Activated CD8-positive, alpha-beta T cell treated with anti-CD3 and anti-CD28 coated beads for 36 hours (primary cell): ENCODE measurements at regions of chr2 and their contacts with region 1.

Region 1: DNA sequence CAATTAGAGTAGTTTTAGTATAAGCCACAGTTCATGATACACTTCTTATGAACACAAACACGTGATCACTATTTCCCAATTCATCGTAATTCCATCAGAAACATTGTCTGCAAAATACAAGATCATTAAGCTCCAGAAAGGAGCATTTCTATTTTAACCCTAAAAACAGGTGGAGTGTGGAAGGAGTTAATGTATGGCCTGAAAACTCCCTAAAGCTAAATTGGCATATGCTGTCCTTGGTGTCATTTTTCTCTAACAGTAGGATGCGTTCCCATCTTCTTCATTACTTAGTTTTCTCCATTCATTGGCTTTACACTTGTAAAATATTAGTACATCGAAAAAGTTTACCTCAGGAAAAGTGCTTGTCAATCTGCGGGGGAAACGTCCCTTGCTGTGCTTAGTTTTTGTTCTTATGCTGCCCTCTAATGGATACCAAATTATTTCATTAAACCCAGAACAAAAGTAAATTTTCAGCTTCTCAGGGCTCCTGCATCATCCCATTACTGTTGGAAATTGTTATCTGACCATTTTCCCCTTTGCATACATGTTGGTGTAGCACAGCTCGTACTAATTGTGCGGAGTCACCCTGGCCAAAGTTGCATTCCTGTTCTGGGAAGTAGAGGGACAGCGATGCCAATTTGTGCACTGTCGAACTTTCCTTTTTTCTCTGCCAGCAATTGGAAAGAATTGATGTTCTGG is 153.4 kb downstream of the GPD2 start:
- DNase-seq: peak; percentile 32
- ATAC-seq: no peak
- H3K4me3 Mint-ChIP-seq: no peak overlapping the region
- H3K27ac Mint-ChIP-seq: no peak overlapping the region
- H3K4me1 Mint-ChIP-seq: peaks cover 4% of the 10 kb centered on the region
- H3K27me3 Mint-ChIP-seq: no peaks in the 10 kb centered on the region
- CTCF ChIP-seq: peak; percentile 76

Region 2: GRCh38 chr2:156192468-156192867 is 397.1 kb before region 1 on chr2:
- CTCF ChIA-PET with region 1: interaction called, 8 read pairs
- POLR2A ChIA-PET with region 1: no interaction called
- intact Hi-C with region 1: loop called (anchors 10 kb)
- DNase-seq: peak; percentile 23
- ATAC-seq: peak; percentile 58
- H3K4me3 Mint-ChIP-seq: no peak overlapping the region
- H3K27ac Mint-ChIP-seq: no peak overlapping the region
- H3K4me1 Mint-ChIP-seq: peaks cover 12% of the 10 kb centered on the region
- H3K27me3 Mint-ChIP-seq: no peaks in the 10 kb centered on the region
- CTCF ChIP-seq: no peak

Region 3: DNA sequence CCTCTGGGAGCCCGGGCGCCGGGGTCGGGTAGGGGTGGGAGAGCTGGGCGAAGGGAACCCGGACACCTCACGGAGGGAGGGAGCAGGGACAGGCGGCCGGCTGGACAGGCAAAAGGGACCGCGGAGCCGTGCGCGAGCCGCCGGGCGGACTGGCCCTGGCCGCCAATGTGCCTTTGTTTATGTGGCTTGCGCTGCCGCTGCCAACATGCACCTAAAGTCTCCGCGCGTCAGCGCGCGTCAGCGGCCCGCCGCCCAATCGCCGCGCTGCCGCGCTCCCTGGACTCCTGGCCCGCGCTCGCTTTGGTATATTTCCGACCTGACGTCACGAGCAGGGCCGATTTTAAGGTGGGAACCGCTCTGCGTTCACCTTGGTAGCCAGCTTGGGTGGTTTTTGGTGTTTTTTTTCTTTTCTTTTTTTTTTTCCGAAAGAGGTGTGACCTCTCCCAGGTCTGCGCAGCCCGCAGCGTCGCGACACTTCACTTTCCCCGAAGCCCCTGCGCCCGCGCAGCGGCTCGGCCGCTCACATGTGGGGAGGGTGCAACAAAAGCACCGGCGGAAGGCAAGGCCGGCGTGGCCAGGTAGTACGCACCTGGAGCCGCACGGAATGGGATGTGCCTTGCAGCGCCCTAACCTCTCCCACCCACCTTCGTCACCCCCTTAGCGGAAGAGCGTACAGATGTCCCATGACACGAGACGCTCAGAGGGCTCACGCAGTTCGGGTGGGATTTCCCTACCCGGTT is 256.8 kb before region 1 on chr2 and contains the start of gene NR4A2:
- CTCF ChIA-PET with region 1: interaction called, 33 read pairs
- POLR2A ChIA-PET with region 1: interaction called, 7 read pairs
- intact Hi-C with region 1: loop called (anchors 5 kb)
- DNase-seq: peak; percentile 96
- ATAC-seq: peak; percentile 56
- H3K4me3 Mint-ChIP-seq: peak within 1 kb of the TSS; percentile 82
- H3K27ac Mint-ChIP-seq: peak within 1 kb of the TSS; percentile 98
- H3K4me1 Mint-ChIP-seq: peaks cover 43% of the 10 kb centered on the region
- H3K27me3 Mint-ChIP-seq: no peaks in the 10 kb centered on the region
- CTCF ChIP-seq: no peak
- total RNA-seq, gene NR4A2: 57.6 to 61.6 TPM

Region 4: DNA sequence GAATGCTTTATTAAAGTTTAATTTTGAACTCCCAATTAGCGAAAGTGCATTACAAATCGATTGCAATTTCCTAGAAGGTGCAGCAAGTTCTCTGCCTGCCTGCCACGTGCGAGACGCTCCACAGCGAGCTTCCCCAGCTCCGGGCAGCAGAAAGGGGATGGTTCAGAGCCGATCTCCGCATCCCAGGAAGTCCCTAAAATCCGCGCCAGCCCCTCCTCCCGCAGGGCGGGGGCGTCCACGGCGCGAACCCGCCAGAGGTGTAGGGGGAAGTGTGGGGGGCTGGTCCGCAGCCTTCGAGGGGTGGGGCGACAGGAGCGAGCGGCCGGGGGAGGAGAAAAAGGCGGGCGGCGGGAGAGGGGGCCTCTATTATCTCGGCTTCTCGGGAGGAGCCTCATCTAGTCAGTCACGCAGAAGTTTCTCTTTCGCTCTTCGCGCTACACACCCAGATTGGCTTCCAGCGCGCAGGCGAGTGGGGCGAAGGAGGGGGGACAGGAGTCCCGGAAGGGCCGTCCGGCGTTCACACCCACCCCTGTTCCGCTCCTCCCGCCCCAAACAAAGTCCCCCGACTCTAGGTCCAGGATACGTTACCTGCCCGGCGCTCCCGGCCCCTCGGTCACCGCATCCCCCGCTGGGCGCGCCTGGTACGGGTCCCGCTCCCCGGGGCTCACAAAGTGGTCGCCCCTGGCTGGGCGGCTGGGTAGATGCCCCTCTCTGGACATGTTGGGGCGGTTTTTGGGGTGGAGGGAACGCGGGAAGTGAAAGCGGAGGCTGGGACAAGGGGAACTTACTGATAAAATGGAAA is 247.9 kb before region 1 on chr2:
- CTCF ChIA-PET with region 1: interaction called, 21 read pairs
- POLR2A ChIA-PET with region 1: interaction called, 3 read pairs
- intact Hi-C with region 1: no loop called
- DNase-seq: peak; percentile 94
- ATAC-seq: peak; percentile 81
- H3K4me3 Mint-ChIP-seq: peak overlapping the region; percentile 80
- H3K27ac Mint-ChIP-seq: peak overlapping the region; percentile 97
- H3K4me1 Mint-ChIP-seq: peaks cover 45% of the 10 kb centered on the region
- H3K27me3 Mint-ChIP-seq: no peaks in the 10 kb centered on the region
- CTCF ChIP-seq: no peak

Region 5: GRCh38 chr2:156400706-156401678 is 188.5 kb before region 1 on chr2:
- CTCF ChIA-PET with region 1: interaction called, 11 read pairs
- POLR2A ChIA-PET with region 1: no interaction called
- intact Hi-C with region 1: no loop called
- DNase-seq: peak; percentile 85
- ATAC-seq: peak; percentile 73
- H3K4me3 Mint-ChIP-seq: peak overlapping the region; percentile 80
- H3K27ac Mint-ChIP-seq: peak overlapping the region; percentile 91
- H3K4me1 Mint-ChIP-seq: peaks cover 22% of the 10 kb centered on the region
- H3K27me3 Mint-ChIP-seq: peaks cover 2% of the 10 kb centered on the region
- CTCF ChIP-seq: no peak

Region 6: DNA sequence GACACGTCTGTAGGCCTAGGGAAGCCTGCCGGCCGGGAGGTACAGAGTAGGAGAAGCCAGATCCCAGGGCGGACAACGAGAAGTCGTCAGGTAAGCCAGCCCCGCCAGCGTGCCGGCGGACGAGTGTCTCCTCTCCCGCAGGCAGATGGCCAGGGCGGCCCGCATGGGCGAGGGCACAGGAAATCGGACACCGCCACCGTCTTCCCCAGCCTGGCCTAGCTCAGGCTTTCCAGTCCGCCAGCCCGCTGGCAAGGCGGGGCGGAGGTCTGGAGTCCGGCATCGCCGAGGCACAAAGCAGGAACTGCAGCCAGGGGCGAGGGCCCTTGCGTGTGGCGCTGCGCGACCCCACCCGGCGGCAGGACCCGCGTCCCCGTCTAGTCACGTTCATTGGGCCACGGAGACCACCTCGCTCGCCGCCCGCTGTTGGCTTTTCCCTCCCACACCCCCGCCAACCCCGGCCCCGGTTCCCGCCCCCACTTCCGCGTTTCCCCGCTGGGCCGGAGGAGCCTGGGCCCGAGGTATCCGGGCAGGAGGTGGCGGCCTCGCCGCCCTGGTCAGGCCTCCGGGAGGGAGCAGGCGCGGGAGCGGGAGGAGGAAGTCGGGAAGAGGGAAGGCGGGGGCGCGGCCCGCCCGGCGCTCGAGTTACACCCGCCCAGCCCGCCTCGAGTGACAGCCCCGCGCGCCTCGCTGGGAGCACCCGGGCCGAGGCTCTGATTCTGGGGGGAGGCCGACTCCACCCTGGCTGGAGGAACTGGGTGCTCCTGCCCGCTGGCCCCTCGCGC is 153.6 kb before region 1 on chr2 and contains the start of gene GPD2:
- CTCF ChIA-PET with region 1: interaction called, 12 read pairs
- POLR2A ChIA-PET with region 1: no interaction called
- intact Hi-C with region 1: loop called (anchors 10 kb)
- DNase-seq: peak; percentile 59
- ATAC-seq: peak; percentile 69
- H3K4me3 Mint-ChIP-seq: peak within 1 kb of the TSS; percentile 85
- H3K27ac Mint-ChIP-seq: peak within 1 kb of the TSS; percentile 94
- H3K4me1 Mint-ChIP-seq: peaks cover 32% of the 10 kb centered on the region
- H3K27me3 Mint-ChIP-seq: no peaks in the 10 kb centered on the region
- CTCF ChIP-seq: no peak
- total RNA-seq, gene GPD2: 33.5 to 40.9 TPM

Region 7: GRCh38 chr2:156565066-156565710 is 24.3 kb before region 1 on chr2:
- CTCF ChIA-PET with region 1: interaction called, 14 read pairs
- POLR2A ChIA-PET with region 1: no interaction called
- intact Hi-C with region 1: no loop called
- DNase-seq: no peak
- ATAC-seq: no peak
- H3K4me3 Mint-ChIP-seq: no peak overlapping the region
- H3K27ac Mint-ChIP-seq: peak overlapping the region; percentile 52
- H3K4me1 Mint-ChIP-seq: peaks cover 11% of the 10 kb centered on the region
- H3K27me3 Mint-ChIP-seq: no peaks in the 10 kb centered on the region
- CTCF ChIP-seq: no peak

Region 8: DNA sequence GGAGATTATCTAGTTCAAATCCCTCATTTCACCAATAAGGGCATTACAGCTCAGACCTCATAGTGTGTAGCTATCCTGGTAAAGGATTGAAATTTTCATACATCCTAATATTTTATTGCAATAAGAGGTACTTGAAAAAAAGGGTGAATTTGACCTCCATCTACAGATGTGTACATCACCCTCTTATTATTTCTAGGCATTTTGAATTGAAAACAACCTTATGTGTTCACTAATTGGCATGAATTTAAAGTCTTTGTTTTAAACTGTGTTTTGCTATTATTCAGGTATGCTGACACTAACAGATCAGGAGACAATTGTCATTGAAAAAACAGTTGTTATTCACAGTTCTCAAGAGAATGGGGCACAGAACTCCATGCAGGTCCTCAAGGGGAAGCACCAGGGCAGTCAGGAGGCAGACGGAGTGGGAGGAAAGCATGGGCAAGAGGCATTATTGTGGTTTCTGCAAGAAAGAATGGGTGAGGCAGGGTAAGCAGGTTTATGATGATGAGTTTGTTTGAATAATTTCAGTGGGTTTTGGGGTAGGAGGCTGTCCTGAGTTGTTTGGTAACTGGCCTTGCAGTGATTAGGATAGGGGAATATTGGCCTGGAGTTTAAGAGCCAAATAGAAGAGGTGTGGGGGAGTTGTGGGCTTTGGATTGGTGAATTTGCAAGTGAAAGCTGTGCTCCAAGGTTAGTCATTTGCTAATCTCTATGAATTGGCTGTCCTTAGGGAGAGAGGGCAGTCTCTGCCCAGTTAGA is 41.2 kb after region 1 on chr2:
- CTCF ChIA-PET with region 1: no interaction called
- POLR2A ChIA-PET with region 1: no interaction called
- intact Hi-C with region 1: no loop called
- DNase-seq: no peak
- ATAC-seq: no peak
- H3K4me3 Mint-ChIP-seq: no peak overlapping the region
- H3K27ac Mint-ChIP-seq: no peak overlapping the region
- H3K4me1 Mint-ChIP-seq: no peaks in the 10 kb centered on the region
- H3K27me3 Mint-ChIP-seq: peaks cover 8% of the 10 kb centered on the region
- CTCF ChIP-seq: no peak

Region 9: DNA sequence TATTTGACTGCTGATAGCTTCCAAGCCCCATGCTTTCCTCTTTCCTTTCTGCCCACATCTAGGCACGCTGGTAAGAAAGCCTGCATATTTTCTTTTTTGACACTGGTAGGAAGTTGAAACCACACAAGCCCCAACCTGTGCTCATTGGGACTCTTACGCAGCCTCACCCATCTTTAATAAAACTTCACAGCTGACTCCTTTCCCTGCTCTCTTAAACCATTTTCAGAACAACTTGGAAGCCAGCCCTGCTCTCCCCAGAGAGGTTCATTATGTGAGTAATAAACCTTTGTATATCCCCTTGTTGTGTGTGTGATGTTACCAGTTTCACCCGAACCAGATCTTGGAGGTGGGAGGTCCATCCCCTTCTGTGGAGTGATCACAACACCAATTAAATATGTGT is 115.1 kb after region 1 on chr2:
- CTCF ChIA-PET with region 1: no interaction called
- POLR2A ChIA-PET with region 1: no interaction called
- intact Hi-C with region 1: no loop called
- DNase-seq: no peak
- ATAC-seq: no peak
- H3K4me3 Mint-ChIP-seq: no peak overlapping the region
- H3K27ac Mint-ChIP-seq: no peak overlapping the region
- H3K4me1 Mint-ChIP-seq: no peaks in the 10 kb centered on the region
- H3K27me3 Mint-ChIP-seq: peaks cover 4% of the 10 kb centered on the region
- CTCF ChIP-seq: no peak